ENCODE measurements at regions of chr21 and their contacts with region 1.

Region 1: GRCh38 chr21:16942703-16943102 is 570.1 kb upstream of the CXADR start:
- DNase-seq: no peak
- H3K4me3 ChIP-seq: no peak overlapping the region
- H3K27ac ChIP-seq: no peak overlapping the region
- H3K4me1 ChIP-seq: no peaks in the 10 kb centered on the region
- H3K27me3 ChIP-seq: no peaks in the 10 kb centered on the region
- CTCF ChIP-seq: peak in 1 of 6 experiments; percentile 17
- POLR2A ChIP-seq: no peak

Region 2: DNA sequence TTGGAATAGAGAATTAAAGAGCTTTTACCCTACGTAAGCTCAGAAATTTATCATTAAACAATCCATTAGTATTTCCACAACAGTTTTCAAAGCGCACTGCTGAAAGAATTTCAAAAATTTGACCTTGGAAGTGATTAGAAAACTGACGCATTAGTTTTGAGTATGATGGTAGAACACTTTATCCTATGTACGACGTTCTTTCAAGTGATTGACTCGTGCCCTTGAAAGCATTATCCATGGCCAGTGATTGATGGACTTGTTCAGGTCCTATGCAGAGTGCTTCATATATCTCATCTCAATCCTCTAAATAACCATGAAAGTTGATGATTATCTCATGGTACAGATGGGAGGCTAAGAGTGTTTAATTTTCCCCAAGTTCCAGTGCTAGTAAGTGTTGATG is 515.8 kb before region 1 on chr21:
- intact Hi-C with region 1: no loop called
- DNase-seq: no peak
- H3K4me3 ChIP-seq: no peak overlapping the region
- H3K27ac ChIP-seq: no peak overlapping the region
- H3K4me1 ChIP-seq: peaks cover 15 to 18% of the 10 kb centered on the region in 2 donors
- H3K27me3 ChIP-seq: no peaks in the 10 kb centered on the region
- CTCF ChIP-seq: no peak
- POLR2A ChIP-seq: no peak

Region 3: GRCh38 chr21:17051054-17051453 is 108.4 kb after region 1 on chr21:
- intact Hi-C with region 1: loop called (anchors 10 kb)
- DNase-seq: no peak
- H3K4me3 ChIP-seq: no peak overlapping the region
- H3K27ac ChIP-seq: no peak overlapping the region
- H3K4me1 ChIP-seq: peaks cover 0 to 5% of the 10 kb centered on the region in 2 donors
- H3K27me3 ChIP-seq: no peaks in the 10 kb centered on the region
- CTCF ChIP-seq: no peak
- POLR2A ChIP-seq: no peak